Sigmoid colon (tissue), 7 donors: ENCODE measurements at regions of chr12 and their contacts with region 1.

Region 1: GRCh38 chr12:11648831-11649702 is at the start of gene ETV6:
- DNase-seq: peak; percentile 88
- H3K4me3 ChIP-seq: peak within 1 kb of the TSS; percentile 81 to 91 (median 84)
- H3K27ac ChIP-seq: peak within 1 kb of the TSS; percentile 97 to 99 (median 98)
- H3K4me1 ChIP-seq: peaks cover 0 to 22% (median 22%) of the 10 kb centered on the region in 4 donors
- H3K27me3 ChIP-seq: no peaks in the 10 kb centered on the region
- CTCF ChIP-seq: no peak
- EP300 ChIP-seq: peak in 2 of 4 donors; percentile 52 to 73
- POLR2A ChIP-seq: no peak
- total RNA-seq, gene ETV6: 15.7 to 35.2 (median 23.6) TPM

Region 2: DNA sequence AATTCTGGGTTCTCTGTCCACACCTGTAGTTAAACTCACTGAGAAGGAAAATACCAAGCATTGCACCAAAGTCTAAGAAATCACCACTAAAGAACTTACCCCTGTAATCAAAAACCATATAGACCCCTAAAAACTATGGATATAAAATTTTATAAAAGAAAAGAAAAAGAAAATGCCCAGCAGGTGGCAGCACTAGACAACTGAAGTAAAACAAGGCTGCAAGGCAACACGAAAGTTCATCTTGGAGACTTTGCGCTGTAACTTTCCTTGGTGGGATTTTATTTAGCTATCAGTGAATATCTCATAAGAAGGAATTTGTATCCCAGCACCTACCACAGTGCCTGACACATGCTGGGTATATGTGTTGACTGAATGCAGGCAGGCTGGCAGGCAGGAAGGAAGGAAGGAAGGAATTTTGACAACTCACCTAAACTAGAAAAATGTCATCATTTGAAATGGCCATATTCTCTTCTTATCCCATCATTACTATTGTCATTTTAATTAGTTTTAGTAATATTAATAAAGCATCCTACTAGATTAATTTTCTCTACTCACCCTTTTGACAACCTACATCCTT is 67.8 kb before region 1 on chr12:
- intact Hi-C with region 1: loop called (anchors 5 kb)
- DNase-seq: peak; percentile 81
- H3K4me3 ChIP-seq: no peak overlapping the region
- H3K27ac ChIP-seq: peak overlapping the region in 2 of 4 donors; percentile 59 to 69
- H3K4me1 ChIP-seq: peaks cover 0 to 33% (median 20%) of the 10 kb centered on the region in 4 donors
- H3K27me3 ChIP-seq: no peaks in the 10 kb centered on the region
- CTCF ChIP-seq: peak; percentile 28 to 80 (median 56)
- EP300 ChIP-seq: no peak
- POLR2A ChIP-seq: no peak

Region 3: DNA sequence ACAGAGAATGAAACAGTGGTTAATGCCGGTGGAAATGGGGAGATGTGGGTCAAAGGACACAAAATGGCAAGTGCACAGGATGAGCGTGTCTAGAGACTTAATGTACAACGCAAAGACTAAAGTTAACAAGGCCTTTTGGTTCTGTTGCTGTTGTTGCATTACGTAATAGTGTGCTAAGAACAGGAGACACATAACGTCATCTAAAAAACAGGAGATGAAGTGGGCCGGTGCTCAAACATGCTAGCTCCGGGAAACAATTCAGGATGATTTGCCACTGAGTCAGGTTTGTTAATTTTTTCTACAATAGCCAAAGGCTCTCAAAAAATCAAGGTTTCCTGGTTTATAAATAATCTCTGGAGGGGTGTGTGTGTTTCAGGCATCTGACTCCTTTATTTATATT is 55.9 kb after region 1 on chr12:
- intact Hi-C with region 1: loop called (anchors 5 kb)
- DNase-seq: peak; percentile 82
- H3K4me3 ChIP-seq: no peak overlapping the region
- H3K27ac ChIP-seq: peak overlapping the region; percentile 62 to 90 (median 82)
- H3K4me1 ChIP-seq: peaks cover 0 to 95% (median 73%) of the 10 kb centered on the region in 4 donors
- H3K27me3 ChIP-seq: no peaks in the 10 kb centered on the region
- CTCF ChIP-seq: no peak
- EP300 ChIP-seq: peak; percentile 31 to 92 (median 82)
- POLR2A ChIP-seq: no peak

Region 4: GRCh38 chr12:11862798-11863197 is 213.7 kb after region 1 on chr12:
- intact Hi-C with region 1: loop called (anchors 5 kb)
- DNase-seq: no peak
- H3K4me3 ChIP-seq: no peak overlapping the region
- H3K27ac ChIP-seq: peak overlapping the region; percentile 82 to 88 (median 84)
- H3K4me1 ChIP-seq: peaks cover 0 to 54% (median 51%) of the 10 kb centered on the region in 4 donors
- H3K27me3 ChIP-seq: no peaks in the 10 kb centered on the region
- CTCF ChIP-seq: no peak
- EP300 ChIP-seq: no peak
- POLR2A ChIP-seq: no peak

Region 5: DNA sequence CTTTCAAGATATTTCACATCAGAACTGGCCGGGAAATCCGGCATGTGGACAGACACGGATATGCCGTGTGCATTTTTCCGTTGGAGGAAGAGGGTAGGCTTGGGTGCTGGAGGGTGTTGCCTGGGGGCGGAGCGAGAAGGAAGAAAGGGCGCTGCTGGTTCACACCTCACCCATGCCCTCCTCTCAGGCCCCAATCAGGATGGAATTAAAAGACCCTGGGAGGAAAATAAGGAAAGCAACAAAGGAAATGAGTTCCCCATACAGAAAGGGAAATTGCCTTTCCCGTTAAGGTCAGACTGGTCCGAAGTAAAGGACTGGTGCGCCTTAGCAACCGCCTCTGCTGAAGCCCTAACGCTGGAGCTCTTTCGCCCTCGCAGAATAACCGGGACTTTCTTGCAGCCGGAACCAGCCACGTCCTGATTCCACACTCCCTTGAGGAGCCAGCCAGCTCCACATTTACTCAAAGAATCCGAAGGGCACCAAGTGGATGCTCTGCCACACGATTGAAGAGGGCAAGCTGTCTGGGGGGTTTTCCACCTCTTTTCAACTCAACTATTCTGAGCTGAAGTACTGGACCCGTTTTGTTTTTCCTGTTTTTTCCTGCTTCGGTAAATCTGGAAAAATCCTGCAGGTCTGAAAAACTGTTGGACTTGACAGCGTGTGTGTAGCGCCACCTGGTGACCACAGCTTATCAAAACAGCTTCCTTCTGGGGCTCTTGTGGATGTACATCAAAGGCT is 384.0 kb after region 1 on chr12:
- intact Hi-C with region 1: loop called (anchors 5 kb)
- DNase-seq: peak; percentile 87
- H3K4me3 ChIP-seq: peak overlapping the region; percentile 24 to 49 (median 42)
- H3K27ac ChIP-seq: peak overlapping the region; percentile 79 to 83 (median 79)
- H3K4me1 ChIP-seq: peaks cover 0 to 10% (median 8%) of the 10 kb centered on the region in 4 donors
- H3K27me3 ChIP-seq: no peaks in the 10 kb centered on the region
- CTCF ChIP-seq: peak; percentile 82 to 89 (median 86)
- EP300 ChIP-seq: no peak
- POLR2A ChIP-seq: no peak

Region 6: DNA sequence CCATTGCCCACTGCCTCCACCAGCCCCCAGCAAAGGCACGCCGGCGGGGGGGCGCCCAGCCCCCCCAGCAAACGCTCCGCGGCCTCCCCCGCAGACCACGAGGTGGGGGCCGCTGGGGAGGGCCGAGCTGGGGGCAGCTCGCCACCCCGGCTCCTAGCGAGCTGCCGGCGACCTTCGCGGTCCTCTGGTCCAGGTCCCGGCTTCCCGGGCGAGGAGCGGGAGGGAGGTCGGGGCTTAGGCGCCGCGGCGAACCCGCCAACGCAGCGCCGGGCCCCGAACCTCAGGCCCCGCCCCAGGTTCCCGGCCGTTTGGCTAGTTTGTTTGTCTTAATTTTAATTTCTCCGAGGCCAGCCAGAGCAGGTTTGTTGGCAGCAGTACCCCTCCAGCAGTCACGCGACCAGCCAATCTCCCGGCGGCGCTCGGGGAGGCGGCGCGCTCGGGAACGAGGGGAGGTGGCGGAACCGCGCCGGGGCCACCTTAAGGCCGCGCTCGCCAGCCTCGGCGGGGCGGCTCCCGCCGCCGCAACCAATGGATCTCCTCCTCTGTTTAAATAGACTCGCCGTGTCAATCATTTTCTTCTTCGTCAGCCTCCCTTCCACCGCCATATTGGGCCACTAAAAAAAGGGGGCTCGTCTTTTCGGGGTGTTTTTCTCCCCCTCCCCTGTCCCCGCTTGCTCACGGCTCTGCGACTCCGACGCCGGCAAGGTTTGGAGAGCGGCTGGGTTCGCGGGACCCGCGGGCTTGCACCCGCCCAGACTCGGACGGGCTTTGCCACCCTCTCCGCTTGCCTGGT is 1067.9 kb after region 1 on chr12 and contains the start of gene CDKN1B:
- intact Hi-C with region 1: loop called (anchors 10 kb)
- DNase-seq: peak; percentile 98
- H3K4me3 ChIP-seq: peak within 1 kb of the TSS; percentile 77 to 94 (median 88)
- H3K27ac ChIP-seq: peak within 1 kb of the TSS; percentile 98 to 100 (median 99)
- H3K4me1 ChIP-seq: peaks cover 0 to 62% (median 59%) of the 10 kb centered on the region in 4 donors
- H3K27me3 ChIP-seq: no peaks in the 10 kb centered on the region
- CTCF ChIP-seq: no peak
- EP300 ChIP-seq: peak in 1 of 4 donors; percentile 56
- POLR2A ChIP-seq: peak; percentile 89 to 90
- total RNA-seq, gene CDKN1B: 52.5 to 106 (median 81.3) TPM